A673 (cell line): ENCODE measurements at regions of chr12 and their contacts with region 1.

Region 1: GRCh38 chr12:80299976-80300375 is 144.1 kb upstream of the PTPRQ start:
- DNase-seq: no peak
- H3K4me3 ChIP-seq: no peak overlapping the region
- H3K27ac ChIP-seq: no peak overlapping the region
- H3K4me1 ChIP-seq: no peaks in the 10 kb centered on the region
- H3K27me3 ChIP-seq: no peaks in the 10 kb centered on the region
- CTCF ChIP-seq: no peak

Region 2: GRCh38 chr12:80551897-80552296 is 251.9 kb after region 1 on chr12:
- CTCF ChIA-PET with region 1: no interaction called
- POLR2A ChIA-PET with region 1: no interaction called
- intact Hi-C with region 1: no loop called
- DNase-seq: peak; percentile 96
- H3K4me3 ChIP-seq: no peak overlapping the region
- H3K27ac ChIP-seq: peak overlapping the region; percentile 44
- H3K4me1 ChIP-seq: peaks cover 35% of the 10 kb centered on the region
- H3K27me3 ChIP-seq: no peaks in the 10 kb centered on the region
- CTCF ChIP-seq: no peak

Region 3: GRCh38 chr12:81330480-81330879 is 1030.5 kb after region 1 on chr12:
- CTCF ChIA-PET with region 1: no interaction called
- POLR2A ChIA-PET with region 1: interaction called, 12 read pairs
- intact Hi-C with region 1: no loop called
- DNase-seq: peak; percentile 39
- H3K4me3 ChIP-seq: no peak overlapping the region
- H3K27ac ChIP-seq: no peak overlapping the region
- H3K4me1 ChIP-seq: peaks cover 3% of the 10 kb centered on the region
- H3K27me3 ChIP-seq: no peaks in the 10 kb centered on the region
- CTCF ChIP-seq: peak; percentile 50; the same call in 1 of the 2 replicates